ENCODE measurements at regions of chr16 and their contacts with region 1.

Region 1: GRCh38 chr16:3358884-3359283 is 3.2 kb downstream of the OR2C1 start:
- DNase-seq: no peak
- ATAC-seq: no peak
- H3K4me3 ChIP-seq: no peak overlapping the region
- H3K4me3 Mint-ChIP-seq: no peak overlapping the region
- H3K27ac ChIP-seq: no peak overlapping the region
- H3K27ac Mint-ChIP-seq: no peak overlapping the region
- H3K4me1 ChIP-seq: peaks cover 1% of the 10 kb centered on the region
- H3K4me1 Mint-ChIP-seq: peaks cover 6% of the 10 kb centered on the region
- H3K27me3 ChIP-seq: peaks cover 10 to 13% of the 10 kb centered on the region in 2 experiments
- H3K27me3 Mint-ChIP-seq: peaks cover 35% of the 10 kb centered on the region
- CTCF ChIP-seq: no peak

Region 2: GRCh38 chr16:1871974-1872635 is 1486.8 kb before region 1 on chr16 and contains the start of gene MEIOB:
- CTCF ChIA-PET with region 1: no interaction called
- POLR2A ChIA-PET with region 1: no interaction called
- intact Hi-C with region 1: loop called in 1 of 2 experiments (anchors 10 kb)
- DNase-seq: peak in 9 of 14 experiments; percentile 6 to 63 (median 29)
- ATAC-seq: peak; percentile 78
- H3K4me3 ChIP-seq: no peak within 1 kb of the TSS
- H3K4me3 Mint-ChIP-seq: no peak within 1 kb of the TSS
- H3K27ac ChIP-seq: no peak within 1 kb of the TSS
- H3K27ac Mint-ChIP-seq: no peak within 1 kb of the TSS
- H3K4me1 ChIP-seq: peaks cover 7% of the 10 kb centered on the region
- H3K4me1 Mint-ChIP-seq: peaks cover 5% of the 10 kb centered on the region
- H3K27me3 ChIP-seq: peaks cover 11 to 14% of the 10 kb centered on the region in 2 experiments
- H3K27me3 Mint-ChIP-seq: peaks cover 39% of the 10 kb centered on the region
- CTCF ChIP-seq: no peak
- total RNA-seq, gene MEIOB: not detected